B cell (primary cell): ENCODE measurements at regions of chr3 and their contacts with region 1.

Region 1: GRCh38 chr3:196609343-196609775 is 30.1 kb upstream of the NRROS start:
- DNase-seq: peak; percentile 93
- ATAC-seq: peak; percentile 92
- H3K4me3 ChIP-seq: peak overlapping the region in 2 of 5 experiments; percentile 5 to 11
- H3K4me3 Mint-ChIP-seq: peak overlapping the region; percentile 70
- H3K27ac ChIP-seq: peak overlapping the region in 1 of 2 donors; percentile 15
- H3K27ac Mint-ChIP-seq: peak overlapping the region; percentile 86
- H3K4me1 ChIP-seq: peaks cover 8 to 12% of the 10 kb centered on the region in 2 donors
- H3K4me1 Mint-ChIP-seq: peaks cover 15% of the 10 kb centered on the region
- H3K27me3 ChIP-seq: no peaks in the 10 kb centered on the region
- H3K27me3 Mint-ChIP-seq: no peaks in the 10 kb centered on the region
- CTCF ChIP-seq: peak; percentile 92

Region 2: GRCh38 chr3:196590279-196590678 is 19.1 kb before region 1 on chr3:
- CTCF ChIA-PET with region 1: interaction called, 11 read pairs
- POLR2A ChIA-PET with region 1: no interaction called
- intact Hi-C with region 1: no loop called
- DNase-seq: no peak
- ATAC-seq: no peak
- H3K4me3 ChIP-seq: no peak overlapping the region
- H3K4me3 Mint-ChIP-seq: no peak overlapping the region
- H3K27ac ChIP-seq: no peak overlapping the region
- H3K27ac Mint-ChIP-seq: no peak overlapping the region
- H3K4me1 ChIP-seq: no peaks in the 10 kb centered on the region
- H3K4me1 Mint-ChIP-seq: no peaks in the 10 kb centered on the region
- H3K27me3 ChIP-seq: no peaks in the 10 kb centered on the region
- H3K27me3 Mint-ChIP-seq: peaks cover 4% of the 10 kb centered on the region
- CTCF ChIP-seq: no peak

Region 3: DNA sequence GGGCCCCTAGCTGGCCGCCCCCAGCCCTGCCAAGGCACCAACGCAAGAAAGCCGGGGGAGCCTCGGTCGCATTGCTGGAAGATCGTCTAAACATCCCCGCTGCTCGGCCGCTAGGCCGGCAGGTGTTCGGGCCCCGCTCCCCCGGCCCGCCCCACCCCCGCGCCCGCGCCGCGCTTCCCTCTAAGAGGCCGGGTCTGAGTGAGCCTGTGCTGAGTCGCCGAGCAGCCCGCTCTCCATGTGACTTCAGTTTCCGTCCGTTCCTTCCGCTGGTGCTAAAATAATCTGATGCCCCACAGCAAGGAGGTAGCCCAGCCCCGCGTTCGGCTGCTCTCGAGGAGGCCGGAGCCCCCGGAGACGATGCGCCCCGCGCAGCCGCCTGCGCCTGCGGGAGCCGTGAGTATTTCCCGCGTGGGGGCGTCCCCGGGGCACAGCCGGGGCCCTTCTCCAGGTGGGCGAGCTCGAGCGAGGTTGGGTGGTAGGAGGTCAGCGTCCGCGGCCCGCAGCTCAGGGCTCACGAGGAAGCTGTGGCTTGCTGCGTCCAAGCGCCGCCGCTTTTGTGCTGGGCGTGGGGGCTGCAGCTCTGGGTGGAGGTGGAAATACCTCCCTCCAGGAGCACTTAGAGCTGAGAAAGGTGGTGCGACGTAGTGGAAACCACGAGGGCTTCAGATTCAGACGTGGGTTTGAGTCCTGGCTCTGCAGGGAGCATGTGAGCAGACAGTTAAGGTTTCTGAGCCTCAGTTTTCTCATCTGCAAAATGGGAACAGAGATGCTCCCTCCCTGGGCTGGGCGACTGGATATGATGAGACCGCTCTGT is 30.3 kb after region 1 on chr3 and contains the start of gene NRROS:
- CTCF ChIA-PET with region 1: interaction called, 35 read pairs
- POLR2A ChIA-PET with region 1: interaction called, 15 read pairs
- intact Hi-C with region 1: loop called (anchors 1 kb)
- DNase-seq: peak; percentile 91
- ATAC-seq: peak; percentile 48
- H3K4me3 ChIP-seq: peak within 1 kb of the TSS; percentile 80 to 88 (median 83)
- H3K4me3 Mint-ChIP-seq: peak within 1 kb of the TSS; percentile 89
- H3K27ac ChIP-seq: peak within 1 kb of the TSS; percentile 85 to 93
- H3K27ac Mint-ChIP-seq: peak within 1 kb of the TSS; percentile 99
- H3K4me1 ChIP-seq: peaks cover 58 to 71% of the 10 kb centered on the region in 2 donors
- H3K4me1 Mint-ChIP-seq: peaks cover 73% of the 10 kb centered on the region
- H3K27me3 ChIP-seq: no peaks in the 10 kb centered on the region
- H3K27me3 Mint-ChIP-seq: no peaks in the 10 kb centered on the region
- CTCF ChIP-seq: no peak
- total RNA-seq, gene NRROS: 85.9 and 87.9 TPM in 2 replicates

Region 4: DNA sequence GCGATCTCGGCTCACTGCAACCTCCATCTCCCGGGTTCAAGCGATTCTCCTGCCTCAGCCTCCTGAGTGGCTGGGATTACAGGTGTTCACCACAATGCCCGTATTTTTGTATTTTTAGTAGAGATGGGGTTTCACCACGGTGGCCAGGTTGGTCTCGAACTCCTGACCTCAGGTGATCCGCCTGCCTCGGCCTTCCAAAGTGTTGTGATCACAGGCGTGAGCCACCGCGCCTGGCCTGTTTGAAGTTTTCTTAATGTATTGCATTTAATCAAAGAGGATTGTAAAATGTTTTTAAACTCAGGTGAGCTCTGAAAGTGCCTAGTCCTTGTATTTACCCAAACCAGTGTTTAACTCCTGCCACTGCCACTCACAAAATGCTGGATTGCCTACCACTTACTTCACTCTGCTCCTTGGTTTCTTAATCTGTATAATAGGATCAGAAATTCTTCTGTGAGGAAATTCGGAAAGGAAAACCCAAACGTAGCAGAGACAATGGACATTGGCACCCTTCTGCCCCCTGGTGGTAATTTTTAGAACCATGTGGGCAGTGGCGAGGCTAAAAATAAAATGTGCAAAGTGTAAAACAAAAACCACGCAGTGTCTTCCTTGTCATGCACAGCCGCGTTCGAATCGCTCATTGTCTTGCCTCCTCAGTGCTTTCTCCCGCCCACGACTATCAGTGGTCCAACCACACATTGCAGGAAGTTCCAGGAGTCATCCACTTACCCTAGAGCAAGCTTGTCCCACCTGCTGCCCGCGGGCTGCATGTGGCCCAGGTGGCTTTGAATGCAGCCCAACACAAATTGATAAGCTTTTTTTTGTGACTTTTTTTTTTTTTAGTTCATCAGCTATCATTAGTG is 75.4 kb after region 1 on chr3:
- CTCF ChIA-PET with region 1: interaction called, 259 read pairs
- POLR2A ChIA-PET with region 1: interaction called, 7 read pairs
- intact Hi-C with region 1: loop called (anchors 1 kb)
- DNase-seq: peak; percentile 87
- ATAC-seq: peak; percentile 92
- H3K4me3 ChIP-seq: peak overlapping the region in 2 of 5 experiments; percentile 34 to 37
- H3K4me3 Mint-ChIP-seq: peak overlapping the region; percentile 57
- H3K27ac ChIP-seq: peak overlapping the region in 1 of 2 donors; percentile 34
- H3K27ac Mint-ChIP-seq: peak overlapping the region; percentile 28
- H3K4me1 ChIP-seq: peaks cover 21 to 26% of the 10 kb centered on the region in 2 donors
- H3K4me1 Mint-ChIP-seq: peaks cover 25% of the 10 kb centered on the region
- H3K27me3 ChIP-seq: no peaks in the 10 kb centered on the region
- H3K27me3 Mint-ChIP-seq: no peaks in the 10 kb centered on the region
- CTCF ChIP-seq: peak; percentile 87

Region 5: GRCh38 chr3:196837819-196838420 is 228.6 kb after region 1 on chr3:
- CTCF ChIA-PET with region 1: interaction called, 7 read pairs
- POLR2A ChIA-PET with region 1: no interaction called
- intact Hi-C with region 1: loop called (anchors 10 kb)
- DNase-seq: peak; percentile 81
- ATAC-seq: peak; percentile 90
- H3K4me3 ChIP-seq: no peak overlapping the region
- H3K4me3 Mint-ChIP-seq: no peak overlapping the region
- H3K27ac ChIP-seq: no peak overlapping the region
- H3K27ac Mint-ChIP-seq: no peak overlapping the region
- H3K4me1 ChIP-seq: peaks cover 0 to 2% of the 10 kb centered on the region in 2 donors
- H3K4me1 Mint-ChIP-seq: no peaks in the 10 kb centered on the region
- H3K27me3 ChIP-seq: no peaks in the 10 kb centered on the region
- H3K27me3 Mint-ChIP-seq: no peaks in the 10 kb centered on the region
- CTCF ChIP-seq: peak; percentile 93